ENCODE measurements at regions of chr17 and their contacts with region 1.

Region 1: DNA sequence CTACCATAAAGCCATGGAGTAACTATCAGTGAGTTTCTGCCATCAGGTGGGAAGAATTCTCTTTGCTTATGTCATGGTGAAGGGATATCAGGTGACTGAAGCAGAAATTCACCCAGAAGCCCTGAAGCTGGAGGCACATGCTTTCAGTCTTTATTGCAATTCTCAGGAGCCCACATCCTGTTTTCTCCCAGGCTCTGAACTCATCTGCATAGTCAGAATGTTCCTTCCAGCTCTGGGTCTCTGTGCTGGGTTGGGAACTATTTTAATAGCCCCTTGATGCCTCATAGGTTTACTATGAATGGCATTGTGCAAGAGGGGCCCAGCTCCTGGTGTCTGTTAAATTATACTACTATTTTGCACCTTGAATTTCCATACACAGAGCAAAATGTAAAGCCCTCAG is 198.4 kb upstream of the SOX9 start:
- DNase-seq: no peak
- ATAC-seq: peak in 2 of 4 donors; percentile 62 to 73
- H3K4me3 ChIP-seq: no peak overlapping the region
- H3K27ac ChIP-seq: peak overlapping the region; percentile 38
- H3K4me1 ChIP-seq: peaks cover 7% of the 10 kb centered on the region
- H3K27me3 ChIP-seq: no peaks in the 10 kb centered on the region
- CTCF ChIP-seq: no peak

Region 2: DNA sequence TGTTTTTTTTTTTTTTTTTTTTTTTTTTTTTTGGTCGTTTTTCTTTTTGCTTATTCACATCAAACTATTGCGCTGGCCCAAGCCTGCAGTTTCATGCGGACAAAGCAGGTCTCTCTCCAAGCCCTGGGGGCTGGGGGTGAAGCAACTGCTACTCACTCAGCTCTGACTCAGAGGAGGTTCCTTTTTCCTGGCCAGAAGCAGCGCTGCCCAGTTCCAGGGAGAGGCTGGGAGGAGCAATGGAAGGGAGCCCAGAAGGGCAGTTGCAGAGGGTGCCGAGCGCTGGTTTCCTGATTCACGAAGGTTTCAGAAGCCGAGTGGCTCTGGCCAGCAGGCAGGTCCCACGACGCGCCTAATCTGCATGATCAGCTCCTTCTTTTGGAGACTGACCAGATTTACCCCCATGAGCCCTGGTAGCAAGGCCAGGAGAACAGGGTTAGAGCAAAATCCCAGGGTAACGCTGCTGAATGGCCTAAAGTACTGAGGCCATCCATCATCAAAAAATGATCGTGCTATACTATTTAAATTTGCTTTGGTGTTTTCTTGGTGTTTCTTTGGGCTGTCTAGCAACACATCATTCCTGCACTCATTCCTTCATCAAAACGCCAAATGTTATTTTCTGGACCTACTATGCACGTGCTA is 53.7 kb after region 1 on chr17:
- intact Hi-C with region 1: loop called in 1 of 2 experiments (anchors 10 kb)
- DNase-seq: peak; percentile 90 to 94
- ATAC-seq: peak; percentile 95 to 99 (median 97)
- H3K4me3 ChIP-seq: peak overlapping the region; percentile 66
- H3K27ac ChIP-seq: peak overlapping the region; percentile 92
- H3K4me1 ChIP-seq: peaks cover 5% of the 10 kb centered on the region
- H3K27me3 ChIP-seq: no peaks in the 10 kb centered on the region
- CTCF ChIP-seq: no peak